Ascending aorta (tissue), 2 donors: ENCODE measurements at regions of chr1 and their contacts with region 1.

Region 1: DNA sequence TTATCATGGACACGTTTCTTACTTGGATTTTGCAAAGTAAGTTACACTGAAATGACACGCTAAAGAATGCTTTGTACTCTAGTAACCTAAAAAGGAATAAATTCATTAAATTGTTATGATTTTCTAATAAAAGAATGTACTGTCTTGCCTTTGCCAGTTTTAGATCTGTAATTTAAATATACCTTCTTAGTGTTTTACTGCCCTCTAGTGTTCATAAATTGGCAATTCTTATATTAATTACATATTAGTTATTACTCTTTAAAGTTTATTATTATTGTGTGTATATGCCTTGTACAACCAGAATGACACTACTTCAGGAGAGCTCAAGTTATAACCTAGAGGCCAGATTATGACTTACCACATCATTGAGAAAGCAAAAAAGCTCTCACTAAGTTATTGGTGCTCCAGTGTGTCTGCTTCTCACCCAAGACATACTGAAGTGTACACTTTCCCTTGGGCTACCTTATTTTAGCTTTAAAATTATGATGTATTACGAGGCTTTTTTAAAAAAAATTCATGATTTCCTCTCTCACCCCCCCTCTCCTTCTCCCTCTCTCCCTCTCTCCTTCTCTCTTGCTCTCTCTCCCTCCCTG is 169.9 kb downstream of the HS2ST1 start:
- DNase-seq: no peak
- H3K4me3 ChIP-seq: no peak overlapping the region
- H3K27ac ChIP-seq: no peak overlapping the region
- H3K4me1 ChIP-seq: no peaks in the 10 kb centered on the region
- H3K27me3 ChIP-seq: no peaks in the 10 kb centered on the region
- CTCF ChIP-seq: peak; percentile 16 to 68 (median 62)

Region 2: GRCh38 chr1:86380257-86380861 is 704.0 kb before region 1 on chr1:
- intact Hi-C with region 1: loop called (anchors 2 kb)
- DNase-seq: no peak
- H3K4me3 ChIP-seq: no peak overlapping the region
- H3K27ac ChIP-seq: no peak overlapping the region
- H3K4me1 ChIP-seq: peaks cover 0 to 3% of the 10 kb centered on the region in 2 donors
- H3K27me3 ChIP-seq: no peaks in the 10 kb centered on the region
- CTCF ChIP-seq: peak; percentile 60 to 77 (median 66)

Region 3: DNA sequence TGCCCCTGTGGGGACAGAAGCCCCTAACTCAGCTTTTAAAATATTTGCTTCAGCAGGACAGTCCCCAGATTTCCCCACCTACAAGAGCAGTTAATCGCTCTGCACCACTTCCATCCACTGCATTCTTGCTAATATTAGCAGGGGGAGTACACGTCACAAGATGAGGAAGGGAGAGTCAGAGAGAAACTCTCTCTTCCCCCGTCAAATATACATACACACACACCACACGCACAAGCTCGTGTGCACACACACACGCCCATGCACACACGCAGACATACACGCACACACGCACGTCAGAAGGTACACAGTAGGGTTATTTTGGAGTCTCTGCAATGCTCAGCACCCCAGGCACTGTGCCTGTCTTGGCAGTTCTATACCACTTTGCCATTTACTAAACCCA is 613.5 kb before region 1 on chr1:
- intact Hi-C with region 1: loop called (anchors 10 kb)
- DNase-seq: no peak
- H3K4me3 ChIP-seq: no peak overlapping the region
- H3K27ac ChIP-seq: no peak overlapping the region
- H3K4me1 ChIP-seq: no peaks in the 10 kb centered on the region
- H3K27me3 ChIP-seq: no peaks in the 10 kb centered on the region
- CTCF ChIP-seq: no peak

Region 4: GRCh38 chr1:86833461-86834215 is 250.7 kb before region 1 on chr1:
- intact Hi-C with region 1: loop called (anchors 1 kb)
- DNase-seq: peak in 1 of 2 donors; percentile 83
- H3K4me3 ChIP-seq: no peak overlapping the region
- H3K27ac ChIP-seq: no peak overlapping the region
- H3K4me1 ChIP-seq: no peaks in the 10 kb centered on the region
- H3K27me3 ChIP-seq: no peaks in the 10 kb centered on the region
- CTCF ChIP-seq: peak in 2 of 3 experiments; percentile 48 to 70

Region 5: DNA sequence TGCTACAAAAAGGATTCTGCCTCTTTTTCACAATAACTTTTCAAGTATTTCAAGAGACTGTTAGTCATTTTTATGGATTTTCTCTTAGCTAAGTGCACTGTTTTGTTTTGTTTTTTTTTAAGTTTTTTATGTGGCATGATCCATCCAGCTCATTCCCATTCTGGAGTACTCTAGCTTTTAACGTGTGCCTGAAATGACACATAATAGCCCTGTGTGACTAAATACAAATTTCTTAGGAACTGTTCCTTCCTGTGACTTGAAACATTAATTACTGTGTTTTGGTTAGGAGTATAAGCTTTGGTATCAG is 26.0 kb before region 1 on chr1:
- intact Hi-C with region 1: no loop called
- DNase-seq: no peak
- H3K4me3 ChIP-seq: peak overlapping the region in 1 of 2 donors; percentile 47
- H3K27ac ChIP-seq: peak overlapping the region in 1 of 2 donors; percentile 16
- H3K4me1 ChIP-seq: peaks cover 0 to 5% of the 10 kb centered on the region in 2 donors
- H3K27me3 ChIP-seq: no peaks in the 10 kb centered on the region
- CTCF ChIP-seq: no peak

Region 6: GRCh38 chr1:87392248-87393192 is 308.2 kb after region 1 on chr1:
- intact Hi-C with region 1: no loop called
- DNase-seq: no peak
- H3K4me3 ChIP-seq: no peak overlapping the region
- H3K27ac ChIP-seq: no peak overlapping the region
- H3K4me1 ChIP-seq: no peaks in the 10 kb centered on the region
- H3K27me3 ChIP-seq: no peaks in the 10 kb centered on the region
- CTCF ChIP-seq: no peak

Region 7: GRCh38 chr1:87684713-87685205 is 600.4 kb after region 1 on chr1:
- intact Hi-C with region 1: no loop called
- DNase-seq: no peak
- H3K4me3 ChIP-seq: peak overlapping the region; percentile 57 to 65
- H3K27ac ChIP-seq: peak overlapping the region in 1 of 2 donors; percentile 52
- H3K4me1 ChIP-seq: no peaks in the 10 kb centered on the region
- H3K27me3 ChIP-seq: no peaks in the 10 kb centered on the region
- CTCF ChIP-seq: no peak